K562 (cell line): ENCODE measurements at regions of chr16 and their contacts with region 1.

Region 1: GRCh38 chr16:7137560-7138330 is 194.9 kb upstream of the RBFOX1 start:
- DNase-seq: no peak
- ATAC-seq: no peak
- H3K4me3 ChIP-seq: no peak overlapping the region
- H3K27ac ChIP-seq: no peak overlapping the region
- H3K4me1 ChIP-seq: no peaks in the 10 kb centered on the region
- H3K27me3 ChIP-seq: peaks cover 0 to 3% of the 10 kb centered on the region in 2 experiments; a peak in 1 of 5 replicates
- CTCF ChIP-seq: no peak
- EP300 ChIP-seq: no peak
- POLR2A ChIP-seq: no peak
- RAD21 ChIP-seq: no peak

Region 2: DNA sequence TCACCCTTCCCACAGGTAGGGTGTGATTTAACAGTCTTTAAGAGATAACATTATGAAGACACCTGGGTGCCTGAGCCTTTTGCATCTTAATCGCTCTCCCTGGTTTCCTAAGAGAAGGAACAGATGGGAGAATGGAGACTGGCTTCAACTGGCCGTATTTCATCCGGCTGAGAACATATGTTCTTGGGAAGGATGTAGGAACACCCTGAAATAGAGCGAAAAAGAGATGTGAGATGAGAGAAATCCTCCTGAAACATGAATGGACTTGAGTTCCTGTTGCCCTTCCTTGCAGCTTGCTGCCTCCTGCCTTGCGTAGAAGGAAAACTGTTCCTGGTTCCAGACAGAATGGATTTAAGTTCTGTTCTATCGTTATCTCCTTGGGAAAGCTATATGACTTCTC is 190.5 kb before region 1 on chr16:
- CTCF ChIA-PET with region 1: no interaction called
- POLR2A ChIA-PET with region 1: no interaction called
- in situ Hi-C with region 1: no loop called
- intact Hi-C with region 1: no loop called
- DNase-seq: no peak
- ATAC-seq: no peak
- H3K4me3 ChIP-seq: no peak overlapping the region
- H3K27ac ChIP-seq: no peak overlapping the region
- H3K4me1 ChIP-seq: no peaks in the 10 kb centered on the region
- H3K27me3 ChIP-seq: no peaks in the 10 kb centered on the region; a peak in 1 of 5 replicates
- CTCF ChIP-seq: no peak
- EP300 ChIP-seq: no peak
- POLR2A ChIP-seq: no peak
- RAD21 ChIP-seq: no peak

Region 3: DNA sequence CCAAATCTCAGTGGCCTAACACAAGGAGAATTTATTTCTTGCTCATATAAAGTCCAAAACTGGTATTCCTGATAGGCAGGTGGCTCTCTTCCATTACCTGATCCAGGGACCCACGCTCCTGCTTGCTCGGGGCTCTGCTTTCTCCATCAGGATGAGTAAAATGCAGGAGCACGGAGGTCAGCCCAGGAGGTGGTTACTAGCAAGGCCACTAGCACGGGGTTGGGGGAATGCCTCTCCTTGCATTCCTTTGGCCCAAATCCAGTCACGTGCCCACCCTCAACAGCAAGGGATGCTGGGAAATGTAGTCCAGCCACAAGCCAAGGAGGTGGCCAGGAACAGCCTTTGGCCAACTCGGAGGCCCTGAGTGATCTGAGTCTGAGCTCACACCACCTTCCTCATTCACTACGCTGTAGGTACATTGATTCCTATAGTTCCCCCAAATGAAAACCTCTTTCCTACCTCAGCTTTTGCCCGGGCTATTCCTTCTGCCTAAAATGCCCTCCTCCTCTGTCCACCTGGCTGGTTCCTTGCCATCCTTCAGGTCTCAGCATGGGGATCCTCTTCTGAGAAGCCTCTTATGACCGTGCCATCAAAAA is 1915.4 kb after region 1 on chr16:
- CTCF ChIA-PET with region 1: no interaction called
- POLR2A ChIA-PET with region 1: no interaction called
- in situ Hi-C with region 1: loop called (anchors 10 kb)
- intact Hi-C with region 1: no loop called
- DNase-seq: peak; percentile 79 to 96 (median 84)
- ATAC-seq: peak; percentile 96
- H3K4me3 ChIP-seq: peak overlapping the region; percentile 23; the same call in 1 of the 2 replicates
- H3K27ac ChIP-seq: peak overlapping the region; percentile 45
- H3K4me1 ChIP-seq: peaks cover 9 to 12% of the 10 kb centered on the region in 2 experiments; a peak in 3 of 5 replicates
- H3K27me3 ChIP-seq: no peaks in the 10 kb centered on the region
- CTCF ChIP-seq: no peak
- EP300 ChIP-seq: no peak
- POLR2A ChIP-seq: peak; percentile 75
- RAD21 ChIP-seq: no peak